Activated naive CD4-positive, alpha-beta T cell treated with anti-CD3 and anti-CD28 coated beads for 36 hours (primary cell): ENCODE measurements at regions of chr1 and their contacts with region 1.

Region 1: DNA sequence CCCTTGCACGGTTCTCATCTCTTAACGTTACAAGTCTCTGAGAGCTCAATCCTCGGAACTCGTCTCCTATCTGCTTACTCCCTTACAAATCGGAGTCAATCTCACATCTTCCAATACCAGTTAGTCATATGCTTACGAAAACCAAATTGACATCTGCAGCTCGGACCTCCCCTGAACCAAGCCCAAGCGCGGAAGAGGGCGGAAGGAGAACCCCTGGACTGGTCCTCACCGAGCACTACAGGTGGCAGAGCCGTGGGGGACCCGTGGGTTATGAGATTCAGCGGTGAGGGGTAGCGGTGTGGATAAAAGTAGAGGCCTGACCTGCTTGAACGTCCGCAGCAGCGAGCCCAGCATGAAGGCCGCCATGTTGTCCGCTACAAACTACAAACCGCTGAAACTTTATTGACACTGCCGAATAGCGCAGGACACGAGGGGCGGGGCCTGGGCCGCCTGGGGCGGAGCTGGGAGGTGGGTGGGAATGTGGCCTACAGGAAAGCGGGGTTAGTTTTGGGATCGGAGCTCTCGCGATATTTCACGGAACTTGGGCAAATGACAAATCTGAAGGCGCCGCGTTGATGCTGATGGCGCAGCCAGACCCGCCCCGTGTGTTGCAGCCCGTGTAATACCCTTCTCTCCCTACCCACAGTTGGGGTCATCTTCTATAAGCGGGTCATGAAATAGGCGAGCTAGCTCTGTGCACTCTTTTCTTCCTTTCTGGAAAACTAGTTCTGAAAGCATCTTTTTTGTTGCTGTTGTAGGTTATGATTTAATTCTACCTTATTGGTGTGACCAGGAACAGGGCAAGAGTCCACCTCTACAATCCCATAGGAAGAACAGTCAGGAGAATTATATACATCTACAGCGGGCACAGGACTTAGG is at the start of gene MRPS14:
- DNase-seq: peak; percentile 100
- H3K4me3 Mint-ChIP-seq: peak within 1 kb of the TSS; percentile 87
- H3K27ac Mint-ChIP-seq: peak within 1 kb of the TSS; percentile 86
- H3K4me1 Mint-ChIP-seq: peaks cover 31% of the 10 kb centered on the region
- H3K27me3 Mint-ChIP-seq: no peaks in the 10 kb centered on the region
- total RNA-seq, gene MRPS14: 48.8 to 51.2 TPM

Region 2: GRCh38 chr1:174022080-174022975 is 1001.0 kb before region 1 on chr1 and contains the start of gene RC3H1:
- CTCF ChIA-PET with region 1: no interaction called
- intact Hi-C with region 1: loop called (anchors 5 kb)
- DNase-seq: peak; percentile 92
- H3K4me3 Mint-ChIP-seq: peak within 1 kb of the TSS; percentile 93
- H3K27ac Mint-ChIP-seq: peak within 1 kb of the TSS; percentile 94
- H3K4me1 Mint-ChIP-seq: peaks cover 32% of the 10 kb centered on the region
- H3K27me3 Mint-ChIP-seq: no peaks in the 10 kb centered on the region
- total RNA-seq, gene RC3H1: 24.2 to 27.1 TPM

Region 3: GRCh38 chr1:174968750-174969244 is 54.5 kb before region 1 on chr1:
- CTCF ChIA-PET with region 1: no interaction called
- intact Hi-C with region 1: loop called (anchors 1 kb)
- DNase-seq: peak; percentile 49
- H3K4me3 Mint-ChIP-seq: peak overlapping the region; percentile 51
- H3K27ac Mint-ChIP-seq: peak overlapping the region; percentile 86
- H3K4me1 Mint-ChIP-seq: peaks cover 63% of the 10 kb centered on the region
- H3K27me3 Mint-ChIP-seq: no peaks in the 10 kb centered on the region

Region 4: DNA sequence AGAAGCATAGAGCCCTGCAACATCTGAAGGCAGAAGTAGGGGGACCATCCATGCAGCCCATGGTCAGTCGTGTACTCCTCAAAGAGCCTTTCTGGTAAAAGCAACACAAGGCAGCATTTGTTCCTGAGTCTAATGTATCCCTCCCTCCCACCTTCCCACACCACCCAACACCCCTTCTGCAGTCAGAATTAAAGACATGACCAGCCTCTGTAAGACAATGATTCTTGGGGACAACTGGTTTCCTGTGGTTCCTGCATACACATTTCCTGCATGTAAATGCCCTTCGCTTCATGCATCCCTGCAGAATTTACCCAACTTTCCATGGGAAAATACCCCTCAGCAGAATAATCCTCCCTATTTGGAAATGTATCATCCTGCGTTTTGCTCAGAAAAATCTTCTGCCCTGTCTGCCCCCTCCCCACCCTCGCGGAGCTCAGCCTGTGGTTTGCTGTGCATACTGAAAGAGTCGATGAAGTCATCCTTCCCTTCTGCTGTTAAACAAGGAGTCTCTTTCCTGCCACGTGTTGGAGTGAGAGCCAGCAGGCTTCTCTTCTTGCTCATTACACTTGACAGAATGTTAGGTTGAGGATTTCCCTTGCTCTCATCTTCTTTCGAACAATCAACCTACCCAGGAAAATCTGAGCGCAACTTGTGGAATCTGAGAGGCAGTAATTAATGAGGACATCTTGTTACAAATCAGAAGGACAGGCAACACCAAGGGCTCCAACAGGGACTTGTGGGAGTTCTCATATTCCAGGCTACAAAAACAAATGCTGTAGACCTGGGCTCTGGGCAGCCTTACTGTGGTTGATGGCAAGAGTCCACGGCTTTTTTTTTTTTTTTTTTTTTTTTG is 49.0 kb after region 1 on chr1:
- CTCF ChIA-PET with region 1: no interaction called
- intact Hi-C with region 1: loop called (anchors 2 kb)
- DNase-seq: peak; percentile 76
- H3K4me3 Mint-ChIP-seq: no peak overlapping the region
- H3K27ac Mint-ChIP-seq: no peak overlapping the region
- H3K4me1 Mint-ChIP-seq: peaks cover 12% of the 10 kb centered on the region
- H3K27me3 Mint-ChIP-seq: peaks cover 10% of the 10 kb centered on the region

Region 5: GRCh38 chr1:175129997-175130648 is 106.8 kb after region 1 on chr1:
- CTCF ChIA-PET with region 1: interaction called, 118 read pairs
- intact Hi-C with region 1: no loop called
- DNase-seq: no peak
- H3K4me3 Mint-ChIP-seq: no peak overlapping the region
- H3K27ac Mint-ChIP-seq: no peak overlapping the region
- H3K4me1 Mint-ChIP-seq: no peaks in the 10 kb centered on the region
- H3K27me3 Mint-ChIP-seq: peaks cover 5% of the 10 kb centered on the region

Region 6: GRCh38 chr1:175192630-175193526 is 169.6 kb after region 1 on chr1 and contains the start of gene KIAA0040:
- CTCF ChIA-PET with region 1: interaction called, 3 read pairs
- intact Hi-C with region 1: loop called (anchors 1 kb)
- DNase-seq: peak; percentile 63
- H3K4me3 Mint-ChIP-seq: peak within 1 kb of the TSS; percentile 92
- H3K27ac Mint-ChIP-seq: peak within 1 kb of the TSS; percentile 93
- H3K4me1 Mint-ChIP-seq: peaks cover 45% of the 10 kb centered on the region
- H3K27me3 Mint-ChIP-seq: no peaks in the 10 kb centered on the region
- total RNA-seq, gene KIAA0040: 19.5 to 21.4 TPM

Region 7: DNA sequence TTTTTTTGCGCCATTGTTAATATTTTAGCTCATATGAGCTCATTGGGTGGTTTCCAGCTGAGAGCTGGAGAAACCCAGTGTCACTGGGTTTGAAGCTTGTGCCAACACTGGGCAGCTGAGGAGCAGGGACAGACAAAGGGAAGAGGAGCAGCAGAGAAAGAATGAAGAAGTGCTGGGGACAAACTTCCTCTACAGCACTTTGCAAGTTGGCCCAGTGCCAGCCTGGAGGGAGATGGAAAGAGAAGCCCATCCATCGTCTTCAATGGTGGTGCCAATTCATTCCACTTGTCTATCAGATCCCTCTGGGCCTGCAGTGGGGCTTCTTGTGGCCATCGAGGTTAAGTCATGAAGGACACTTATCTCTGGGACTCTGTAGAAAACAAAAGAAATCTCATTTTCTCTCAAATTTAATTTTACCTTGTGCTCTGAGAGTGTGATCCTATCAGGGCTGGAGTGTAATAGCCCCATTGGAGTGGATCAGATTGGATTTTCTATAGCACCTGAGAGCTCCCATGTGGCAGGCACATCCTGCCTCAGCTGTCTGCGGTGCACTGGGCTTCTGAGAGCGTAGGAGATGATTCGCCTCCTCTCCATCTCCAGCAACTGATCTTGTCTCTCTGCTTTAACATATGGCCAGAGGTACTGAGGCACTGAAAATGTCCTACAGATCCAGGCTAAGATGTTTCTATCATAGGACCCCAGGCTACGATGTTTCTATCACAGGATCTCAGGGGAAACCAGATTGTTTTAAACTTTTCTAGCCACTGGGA is 605.5 kb after region 1 on chr1:
- CTCF ChIA-PET with region 1: no interaction called
- intact Hi-C with region 1: no loop called
- DNase-seq: no peak
- H3K4me3 Mint-ChIP-seq: no peak overlapping the region
- H3K27ac Mint-ChIP-seq: no peak overlapping the region
- H3K4me1 Mint-ChIP-seq: no peaks in the 10 kb centered on the region
- H3K27me3 Mint-ChIP-seq: peaks cover 7% of the 10 kb centered on the region